Gastrocnemius medialis (tissue), 4 donors: ENCODE measurements at regions of chr7 and their contacts with region 1.

Region 1: GRCh38 chr7:23105644-23106056 is at the start of gene KLHL7:
- DNase-seq: peak; percentile 95 to 96
- ATAC-seq: peak; percentile 95 to 97
- H3K4me3 ChIP-seq: peak within 1 kb of the TSS; percentile 84 to 99 (median 88)
- H3K27ac ChIP-seq: peak within 1 kb of the TSS; percentile 87 to 96 (median 92)
- H3K4me1 ChIP-seq: peaks cover 33 to 48% of the 10 kb centered on the region in 2 donors
- H3K27me3 ChIP-seq: no peaks in the 10 kb centered on the region
- CTCF ChIP-seq: peak in 1 of 5 experiments; percentile 16
- POLR2A ChIP-seq: peak; percentile 86 to 90
- total RNA-seq, gene KLHL7: 12.2 to 21.4 (median 14.9) TPM

Region 2: DNA sequence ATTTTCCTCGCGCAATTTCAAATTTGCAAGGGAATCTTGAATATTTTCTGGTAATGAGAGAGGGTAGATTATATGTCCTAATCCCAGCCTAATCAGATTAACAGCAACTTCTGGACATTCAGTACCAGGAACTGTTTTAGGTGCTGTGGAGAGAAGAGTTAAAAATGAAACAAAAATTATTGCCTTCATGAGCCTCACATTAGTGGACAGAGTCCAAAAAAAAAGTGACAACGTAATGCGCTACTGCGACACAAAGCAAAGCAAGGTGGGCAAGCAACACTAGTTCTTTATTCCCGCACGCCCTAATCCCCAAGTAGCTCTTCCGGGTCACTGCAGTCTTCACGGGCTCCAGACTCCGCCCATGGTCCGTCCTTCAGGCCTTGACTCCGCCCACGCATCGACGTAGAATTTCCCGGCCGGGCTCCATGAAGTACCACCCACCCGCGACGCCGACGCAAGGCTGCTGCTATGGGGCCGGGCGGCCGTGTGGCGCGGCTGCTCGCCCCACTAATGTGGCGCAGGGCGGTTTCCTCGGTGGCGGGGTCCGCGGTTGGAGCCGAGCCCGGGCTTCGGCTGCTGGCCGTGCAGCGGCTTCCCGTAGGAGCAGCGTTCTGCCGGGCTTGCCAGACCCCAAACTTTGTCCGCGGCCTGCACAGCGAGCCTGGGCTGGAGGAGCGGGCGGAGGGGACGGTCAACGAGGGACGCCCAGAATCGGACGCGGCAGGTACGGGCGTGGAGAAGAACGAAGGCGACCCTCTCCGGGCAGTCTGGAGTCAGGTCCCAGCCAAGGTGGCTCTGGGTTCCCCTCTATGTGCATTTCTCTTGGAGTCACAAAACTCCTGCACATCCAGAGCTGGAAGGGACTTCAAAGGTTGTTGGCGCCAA is 193.5 kb after region 1 on chr7 and contains the start of gene MALSU1:
- in situ Hi-C with region 1: no loop called
- intact Hi-C with region 1: loop called (anchors 5 kb)
- DNase-seq: peak; percentile 94 to 95
- ATAC-seq: peak; percentile 100
- H3K4me3 ChIP-seq: peak within 1 kb of the TSS; percentile 78 to 99 (median 91)
- H3K27ac ChIP-seq: peak within 1 kb of the TSS; percentile 86 to 93 (median 88)
- H3K4me1 ChIP-seq: peaks cover 25 to 34% of the 10 kb centered on the region in 2 donors
- H3K27me3 ChIP-seq: no peaks in the 10 kb centered on the region
- CTCF ChIP-seq: no peak
- POLR2A ChIP-seq: peak; percentile 83 to 90
- total RNA-seq, gene MALSU1: 83.8 to 112 (median 109) TPM